ENCODE measurements at regions of chr9 and their contacts with region 1.

Region 1: DNA sequence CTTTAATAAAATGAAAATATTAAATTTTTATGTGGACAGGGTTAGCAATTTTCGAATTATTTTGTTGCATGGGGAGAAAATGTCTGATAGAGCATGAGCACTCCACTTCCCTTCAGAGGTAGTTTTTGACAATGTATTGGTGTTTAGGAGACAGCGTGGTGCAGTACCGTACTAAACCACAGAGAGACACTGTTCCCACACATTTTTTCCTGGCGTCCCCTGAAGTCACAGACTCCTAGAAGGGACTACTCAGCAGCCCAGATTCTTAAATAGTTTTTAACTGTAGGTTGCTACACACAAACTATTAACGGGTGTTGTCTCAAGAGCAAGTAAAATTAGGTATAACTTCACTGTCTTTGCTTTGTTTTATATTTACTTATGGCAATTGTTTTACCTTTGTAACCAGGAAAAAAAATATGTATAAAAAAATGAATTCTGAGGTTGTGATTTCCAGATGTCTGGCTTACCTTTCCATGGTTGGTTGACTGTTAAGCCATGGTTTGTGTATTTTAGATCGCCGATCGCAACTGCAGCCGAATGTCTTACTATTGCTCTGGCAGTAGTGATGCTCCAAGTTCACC is 171.2 kb downstream of the DOCK8 start:
- DNase-seq: peak in 2 of 5 donors; percentile 19 to 34
- ATAC-seq: peak; percentile 79 to 87 (median 84)
- H3K4me3 ChIP-seq: no peak overlapping the region
- H3K27ac ChIP-seq: no peak overlapping the region
- H3K4me1 ChIP-seq: no peaks in the 10 kb centered on the region
- H3K27me3 ChIP-seq: no peaks in the 10 kb centered on the region
- CTCF ChIP-seq: peak; percentile 67 to 89 (median 84)
- POLR2A ChIP-seq: no peak

Region 2: GRCh38 chr9:326667-327066 is 59.2 kb before region 1 on chr9:
- intact Hi-C with region 1: no loop called
- DNase-seq: no peak
- ATAC-seq: no peak
- H3K4me3 ChIP-seq: no peak overlapping the region
- H3K27ac ChIP-seq: no peak overlapping the region
- H3K4me1 ChIP-seq: no peaks in the 10 kb centered on the region
- H3K27me3 ChIP-seq: no peaks in the 10 kb centered on the region
- CTCF ChIP-seq: no peak
- POLR2A ChIP-seq: no peak

Region 3: GRCh38 chr9:551986-552929 is 166.3 kb after region 1 on chr9:
- intact Hi-C with region 1: loop called in 1 of 10 experiments (anchors 5 kb)
- DNase-seq: no peak
- ATAC-seq: peak in 1 of 4 donors; percentile 43
- H3K4me3 ChIP-seq: no peak overlapping the region
- H3K27ac ChIP-seq: peak overlapping the region in 6 of 12 donors; percentile 27 to 53 (median 36)
- H3K4me1 ChIP-seq: peaks cover 2 to 45% (median 16%) of the 10 kb centered on the region in 12 donors
- H3K27me3 ChIP-seq: no peaks in the 10 kb centered on the region
- CTCF ChIP-seq: no peak
- POLR2A ChIP-seq: no peak

Region 4: GRCh38 chr9:763692-764524 is 378.0 kb after region 1 on chr9:
- intact Hi-C with region 1: loop called in 6 of 10 experiments (anchors 5 kb)
- DNase-seq: peak; percentile 65 to 74 (median 72)
- ATAC-seq: peak; percentile 90 to 99 (median 96)
- H3K4me3 ChIP-seq: peak overlapping the region in 6 of 12 donors; percentile 3 to 39 (median 26)
- H3K27ac ChIP-seq: no peak overlapping the region
- H3K4me1 ChIP-seq: peaks cover 0 to 11% (median 0%) of the 10 kb centered on the region in 12 donors
- H3K27me3 ChIP-seq: peaks cover 0 to 3% (median 0%) of the 10 kb centered on the region in 9 donors
- CTCF ChIP-seq: peak; percentile 76 to 97 (median 92)
- POLR2A ChIP-seq: no peak

Region 5: DNA sequence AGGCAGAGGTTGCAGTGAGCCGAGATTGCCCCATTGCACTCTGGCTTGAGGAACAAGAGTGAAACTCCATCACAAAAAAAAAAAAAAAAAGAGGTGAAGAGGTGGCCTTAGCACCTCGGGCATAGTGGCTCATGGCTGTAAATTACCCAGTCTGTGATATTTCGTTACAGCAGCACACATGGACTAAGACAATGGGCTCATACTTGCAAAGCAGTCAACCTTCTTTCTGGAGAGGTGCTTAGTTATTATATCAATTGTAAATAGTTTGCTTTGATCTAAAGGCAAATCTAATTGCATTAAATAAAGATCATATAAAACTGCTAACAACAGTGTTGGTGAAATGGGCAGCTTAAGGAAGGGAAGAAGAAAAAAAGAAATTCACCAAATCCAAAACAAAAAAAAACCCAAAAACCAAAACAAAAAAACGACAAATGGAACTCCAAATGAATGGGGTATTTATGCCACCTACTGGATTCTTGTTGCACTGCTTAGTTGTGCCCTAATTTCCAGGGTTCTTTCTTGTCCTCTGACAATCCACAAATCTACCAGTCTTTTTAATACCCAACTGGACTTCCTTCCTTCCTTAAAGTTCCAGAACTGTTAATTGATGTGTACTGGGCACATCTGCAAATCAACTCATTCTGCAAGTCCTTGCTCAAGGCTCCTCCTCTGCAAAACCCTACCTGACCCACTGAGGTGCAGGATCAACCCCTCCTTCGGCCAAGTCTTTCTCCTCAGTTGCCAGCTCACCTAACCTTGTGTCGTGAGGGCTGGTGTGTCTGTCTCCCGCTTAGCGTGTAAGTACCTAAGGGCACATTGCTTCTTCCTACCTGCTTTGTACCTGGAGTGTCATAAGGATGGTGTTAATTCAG is 420.6 kb after region 1 on chr9:
- intact Hi-C with region 1: loop called in 7 of 10 experiments (anchors 1 to 10 kb)
- DNase-seq: no peak
- ATAC-seq: peak in 1 of 4 donors; percentile 47
- H3K4me3 ChIP-seq: no peak overlapping the region
- H3K27ac ChIP-seq: no peak overlapping the region
- H3K4me1 ChIP-seq: no peaks in the 10 kb centered on the region
- H3K27me3 ChIP-seq: peaks cover 0 to 6% (median 0%) of the 10 kb centered on the region in 9 donors
- CTCF ChIP-seq: peak; percentile 53 to 78 (median 64)
- POLR2A ChIP-seq: no peak

Region 6: GRCh38 chr9:994005-994404 is 608.1 kb after region 1 on chr9:
- intact Hi-C with region 1: loop called in 1 of 10 experiments (anchors 10 kb)
- DNase-seq: no peak
- ATAC-seq: no peak
- H3K4me3 ChIP-seq: no peak overlapping the region
- H3K27ac ChIP-seq: no peak overlapping the region
- H3K4me1 ChIP-seq: peaks cover 0 to 1% (median 0%) of the 10 kb centered on the region in 12 donors
- H3K27me3 ChIP-seq: peaks cover 0 to 40% (median 17%) of the 10 kb centered on the region in 9 donors
- CTCF ChIP-seq: no peak
- POLR2A ChIP-seq: no peak

Measured in heart left ventricle (tissue), 16 donors.